AG04449 (cell line): ENCODE measurements at regions of chr7 and their contacts with region 1.

Region 1: GRCh38 chr7:55158541-55159382 is 139.9 kb downstream of the EGFR start:
- DNase-seq: peak; percentile 83
- H3K4me3 ChIP-seq: no peak overlapping the region
- CTCF ChIP-seq: no peak

Region 2: GRCh38 chr7:55092186-55092974 is 66.4 kb before region 1 on chr7:
- CTCF ChIA-PET with region 1: no interaction called
- POLR2A ChIA-PET with region 1: no interaction called
- DNase-seq: no peak
- H3K4me3 ChIP-seq: no peak overlapping the region
- CTCF ChIP-seq: no peak

Region 3: DNA sequence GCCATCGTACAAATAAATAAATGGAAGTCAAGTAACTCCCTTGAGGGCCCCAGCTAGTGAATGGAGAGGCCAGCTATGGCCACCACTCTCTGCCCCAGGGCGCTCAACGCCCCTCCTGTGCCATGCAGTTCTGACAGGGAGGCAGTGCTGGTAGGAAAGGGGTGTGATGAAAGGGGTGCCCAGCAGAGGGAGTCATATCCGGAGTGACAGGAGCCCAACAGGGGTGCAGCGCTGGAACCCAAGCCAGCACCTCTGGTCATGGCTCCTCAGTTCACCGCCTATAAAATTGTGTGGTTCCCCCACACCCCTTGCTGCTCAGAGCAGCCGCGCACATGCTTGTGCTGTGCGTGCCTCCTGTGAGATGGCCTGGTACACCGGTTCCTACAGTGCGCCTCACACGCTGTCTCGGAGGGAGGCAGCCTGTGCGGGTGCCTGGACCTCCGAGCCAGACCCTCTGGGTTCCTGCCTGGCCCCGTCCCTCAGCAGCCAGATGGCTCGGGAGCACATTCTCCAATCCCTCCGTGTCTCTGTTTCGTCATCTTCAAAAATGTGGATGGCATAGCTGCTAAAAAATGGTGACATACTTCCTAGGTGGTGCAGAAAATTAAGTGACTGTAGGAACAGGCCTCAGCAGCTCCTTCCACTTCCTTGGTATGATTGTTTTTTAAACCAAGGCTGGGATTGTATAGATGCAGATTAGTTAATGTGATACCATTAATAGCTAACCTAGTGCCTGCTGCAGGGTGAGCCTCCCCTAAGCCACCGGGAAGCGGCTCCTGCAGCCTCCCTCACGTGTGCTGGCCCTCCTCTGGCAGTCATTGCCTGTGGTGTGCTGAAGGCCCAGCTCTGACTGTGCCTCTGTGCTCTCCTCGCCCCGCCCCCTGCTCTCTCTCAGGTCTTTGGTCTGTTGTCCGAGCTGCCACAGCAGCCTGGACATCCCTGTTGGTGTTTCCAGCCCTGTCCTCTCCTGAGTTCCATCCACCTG is 14.1 kb before region 1 on chr7:
- CTCF ChIA-PET with region 1: interaction called, 14 read pairs
- POLR2A ChIA-PET with region 1: no interaction called
- DNase-seq: no peak
- H3K4me3 ChIP-seq: no peak overlapping the region
- CTCF ChIP-seq: peak; percentile 33